ENCODE measurements at regions of chr12 and their contacts with region 1.

Region 1: GRCh38 chr12:62799126-62799736 is 135.7 kb downstream of the PPM1H start:
- DNase-seq: peak in 3 of 10 donors; percentile 58 to 77 (median 67)
- H3K4me3 ChIP-seq: no peak overlapping the region
- H3K27ac ChIP-seq: peak overlapping the region in 9 of 59 donors; percentile 1 to 57 (median 27)
- H3K27me3 ChIP-seq: no peaks in the 10 kb centered on the region
- CTCF ChIP-seq: peak; percentile 84 to 98 (median 93)

Region 2: DNA sequence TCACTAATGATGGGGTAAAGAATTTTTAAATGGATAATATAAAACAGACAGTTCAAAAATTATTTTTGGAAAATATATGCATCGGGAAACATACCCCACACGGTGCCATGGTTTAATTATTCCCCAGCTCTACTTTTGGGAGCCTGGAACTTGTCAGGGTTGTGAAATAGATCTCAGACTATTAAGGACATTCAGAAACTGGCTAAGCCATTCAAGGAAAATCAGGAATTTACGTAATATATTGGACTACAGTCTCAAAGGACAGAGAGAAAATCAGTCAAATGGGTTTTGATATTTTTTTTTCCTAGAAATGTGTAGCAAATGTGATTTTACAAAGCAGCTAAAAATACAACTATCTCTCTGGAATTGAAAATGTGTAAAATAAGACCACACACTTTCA is 390.2 kb before region 1 on chr12:
- intact Hi-C with region 1: no loop called
- DNase-seq: no peak
- H3K4me3 ChIP-seq: no peak overlapping the region
- H3K27ac ChIP-seq: no peak overlapping the region
- H3K27me3 ChIP-seq: no peaks in the 10 kb centered on the region
- CTCF ChIP-seq: no peak

Region 3: DNA sequence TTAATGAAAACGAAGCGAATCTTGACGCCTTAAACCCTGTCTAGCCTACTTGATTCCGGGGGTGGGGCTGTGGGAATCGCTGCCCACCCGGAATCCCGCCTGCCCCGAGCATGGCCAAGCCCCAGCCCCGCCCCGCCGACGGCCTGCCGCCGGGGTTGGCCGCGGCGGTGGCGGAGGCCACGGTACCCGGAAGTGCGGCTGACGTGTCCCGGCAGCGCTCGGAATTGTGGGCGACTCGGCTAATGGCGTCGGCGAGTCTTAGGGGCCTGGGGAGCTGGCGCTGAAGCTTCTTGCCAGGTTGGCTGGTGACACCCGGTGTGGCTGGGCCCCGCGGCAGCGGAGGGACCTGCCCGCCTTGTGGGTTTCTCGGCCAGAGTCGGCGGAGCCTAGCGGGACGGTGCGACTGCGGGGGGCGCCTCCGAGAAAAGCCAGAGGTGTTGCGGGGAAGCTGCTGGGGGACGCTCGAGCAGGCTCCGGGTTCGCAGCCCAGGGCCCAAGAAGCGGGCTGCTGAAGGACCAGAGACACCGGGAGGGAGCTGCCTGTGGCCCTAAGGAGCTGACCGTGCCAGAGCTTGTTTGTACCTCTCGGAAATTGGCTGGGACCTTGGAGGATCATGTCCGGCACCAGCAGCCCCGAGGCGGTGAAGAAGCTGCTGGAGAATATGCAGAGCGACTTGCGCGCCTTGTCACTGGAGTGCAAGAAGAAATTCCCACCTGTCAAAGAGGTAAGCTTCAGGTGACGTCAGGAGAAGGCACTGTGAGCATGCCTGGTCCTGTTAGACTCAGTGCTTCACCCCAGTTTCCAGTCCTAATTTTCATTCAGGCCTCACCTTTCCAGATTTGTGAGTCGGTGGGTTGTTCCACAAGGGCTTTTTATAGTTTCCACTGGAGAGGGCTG is 332.4 kb before region 1 on chr12 and contains the start of gene MON2:
- intact Hi-C with region 1: loop called (anchors 10 kb)
- DNase-seq: peak; percentile 72 to 93 (median 86)
- H3K4me3 ChIP-seq: peak within 1 kb of the TSS; percentile 59 to 99 (median 95)
- H3K27ac ChIP-seq: peak within 1 kb of the TSS in 58 of 59 donors; percentile 55 to 96 (median 88)
- H3K27me3 ChIP-seq: no peaks in the 10 kb centered on the region
- CTCF ChIP-seq: peak in 35 of 56 donors; percentile 4 to 59 (median 35)
- total RNA-seq, gene MON2: 59.2 to 136 (median 95.1) TPM

Region 4: GRCh38 chr12:62522984-62523383 is 276.2 kb before region 1 on chr12:
- intact Hi-C with region 1: loop called in 1 of 2 experiments (anchors 5 kb)
- DNase-seq: no peak
- H3K4me3 ChIP-seq: no peak overlapping the region
- H3K27ac ChIP-seq: peak overlapping the region in 35 of 59 donors; percentile 0 to 91 (median 37)
- H3K27me3 ChIP-seq: no peaks in the 10 kb centered on the region
- CTCF ChIP-seq: peak in 35 of 56 donors; percentile 7 to 59 (median 31)

Region 5: DNA sequence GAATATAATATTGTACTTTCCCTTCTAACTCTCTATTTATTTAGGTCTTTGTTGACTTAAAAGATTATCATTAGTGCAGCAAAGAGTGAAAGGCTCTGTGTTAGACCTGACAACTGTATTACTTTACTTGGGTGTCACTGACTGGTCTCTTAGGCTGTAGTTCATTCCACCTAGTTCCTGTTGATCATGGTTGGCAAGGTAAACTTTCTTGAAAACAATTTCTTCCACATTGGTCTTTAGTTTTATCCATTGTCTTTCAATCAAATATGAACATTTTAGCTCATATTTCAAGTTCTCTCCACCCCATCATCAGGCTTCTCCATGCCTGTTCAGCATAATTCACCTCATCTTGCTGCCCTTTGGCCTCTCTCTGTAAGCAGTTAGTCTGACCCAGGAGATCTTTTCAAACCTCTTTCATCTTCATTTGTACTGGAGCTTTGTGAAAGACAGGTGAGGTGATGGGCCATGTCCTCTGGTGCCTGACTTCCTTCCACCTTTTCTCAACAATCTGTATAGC is 167.8 kb after region 1 on chr12:
- intact Hi-C with region 1: no loop called
- DNase-seq: no peak
- H3K4me3 ChIP-seq: no peak overlapping the region
- H3K27ac ChIP-seq: no peak overlapping the region
- H3K27me3 ChIP-seq: no peaks in the 10 kb centered on the region
- CTCF ChIP-seq: no peak

Region 6: GRCh38 chr12:62983599-62984022 is 184.4 kb after region 1 on chr12:
- intact Hi-C with region 1: loop called in 1 of 2 experiments (anchors 5 kb)
- DNase-seq: peak in 2 of 10 donors; percentile 16 to 46
- H3K4me3 ChIP-seq: no peak overlapping the region
- H3K27ac ChIP-seq: no peak overlapping the region
- H3K27me3 ChIP-seq: no peaks in the 10 kb centered on the region
- CTCF ChIP-seq: peak in 50 of 56 donors; percentile 18 to 66 (median 38)

Region 7: GRCh38 chr12:63068857-63069442 is 269.7 kb after region 1 on chr12:
- intact Hi-C with region 1: loop called (anchors 2 to 5 kb)
- DNase-seq: no peak
- H3K4me3 ChIP-seq: no peak overlapping the region
- H3K27ac ChIP-seq: no peak overlapping the region
- H3K27me3 ChIP-seq: no peaks in the 10 kb centered on the region
- CTCF ChIP-seq: peak; percentile 47 to 79 (median 66)